H1 (cell line): ENCODE measurements at regions of chr5 and their contacts with region 1.

Region 1: DNA sequence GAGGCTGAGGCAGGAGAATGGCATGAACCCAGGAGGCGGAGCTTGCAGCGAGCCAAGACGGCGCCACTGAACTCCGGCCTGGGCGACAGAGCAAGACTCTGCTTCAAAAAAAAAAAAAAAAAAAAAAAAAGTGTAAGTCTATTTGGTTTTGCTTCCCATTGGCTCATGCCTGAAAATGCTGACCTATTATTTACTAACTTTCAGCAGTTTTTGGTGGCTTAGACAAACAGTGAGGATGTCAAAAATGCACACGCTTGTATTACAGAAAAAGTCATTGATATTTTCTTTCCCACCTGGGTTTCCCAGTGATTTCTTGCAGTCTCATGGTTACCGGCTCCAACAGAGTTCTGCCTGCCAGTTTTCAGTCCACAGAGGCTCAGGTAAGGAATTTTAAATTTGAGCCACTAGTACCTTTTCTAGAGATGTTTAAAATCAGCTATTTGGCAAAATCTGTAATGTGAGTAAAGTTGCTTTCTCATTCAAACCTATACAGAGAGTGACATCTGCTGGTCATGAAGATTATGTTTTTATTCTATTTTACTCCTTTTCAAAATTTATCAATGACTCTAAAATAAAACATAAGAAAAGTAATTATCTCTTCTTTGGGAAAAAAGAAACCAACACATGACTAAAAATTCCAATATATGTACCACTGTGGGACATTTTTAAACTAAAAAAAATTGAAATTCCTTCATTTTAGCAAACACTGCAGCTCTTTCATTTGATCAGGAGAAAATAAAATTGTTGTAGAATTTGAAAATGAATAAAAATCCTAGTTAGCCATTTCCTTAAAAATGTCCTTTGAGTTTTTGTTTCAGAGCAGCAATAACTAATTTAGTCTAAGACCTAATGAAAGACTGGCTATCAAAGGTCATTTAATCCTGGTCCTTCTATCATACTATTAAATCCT is 8.8 kb downstream of the FAM200C start:
- DNase-seq: no peak
- H3K4me3 ChIP-seq: no peak overlapping the region
- H3K27ac ChIP-seq: no peak overlapping the region
- H3K4me1 ChIP-seq: no peaks in the 10 kb centered on the region
- H3K27me3 ChIP-seq: peaks cover 0 to 1% (median 0%) of the 10 kb centered on the region in 4 experiments; a peak in 1 of 7 replicates
- CTCF ChIP-seq: peak in 2 of 3 experiments; percentile 13 to 29; a peak in 2 of 4 replicates
- EP300 ChIP-seq: no peak
- POLR2A ChIP-seq: no peak
- RAD21 ChIP-seq: peak; percentile 53 to 68

Region 2: GRCh38 chr5:160245506-160246086 is 145.4 kb before region 1 on chr5:
- CTCF ChIA-PET with region 1: interaction called, 12 read pairs
- POLR2A ChIA-PET with region 1: no interaction called
- DNase-seq: no peak
- H3K4me3 ChIP-seq: no peak overlapping the region
- H3K27ac ChIP-seq: no peak overlapping the region
- H3K4me1 ChIP-seq: peaks cover 0 to 3% (median 0%) of the 10 kb centered on the region in 4 experiments; a peak in 4 of 7 replicates
- H3K27me3 ChIP-seq: no peaks in the 10 kb centered on the region
- CTCF ChIP-seq: no peak
- EP300 ChIP-seq: no peak
- POLR2A ChIP-seq: 0 out of 3 replicates have a peak, but pooled peaks of 1 of the 2 experiments have one; percentile 20
- RAD21 ChIP-seq: no peak

Region 3: GRCh38 chr5:160369990-160370712 is 20.9 kb before region 1 on chr5 and contains the start of gene C1QTNF2:
- CTCF ChIA-PET with region 1: interaction called, 15 read pairs
- POLR2A ChIA-PET with region 1: interaction called, 3 read pairs
- DNase-seq: peak in 1 of 2 experiments; percentile 74
- H3K4me3 ChIP-seq: peak within 1 kb of the TSS; percentile 29 to 67 (median 46)
- H3K27ac ChIP-seq: no peak within 1 kb of the TSS
- H3K4me1 ChIP-seq: peaks cover 3 to 5% (median 4%) of the 10 kb centered on the region in 4 experiments; a peak in 4 of 7 replicates
- H3K27me3 ChIP-seq: peaks cover 1 to 15% (median 10%) of the 10 kb centered on the region in 4 experiments
- CTCF ChIP-seq: no peak
- EP300 ChIP-seq: no peak
- POLR2A ChIP-seq: no peak
- RAD21 ChIP-seq: no peak
- total RNA-seq, gene C1QTNF2: 1.0 and 1.3 TPM in 2 replicates

Region 4: GRCh38 chr5:160379511-160379910 is 11.5 kb before region 1 on chr5:
- CTCF ChIA-PET with region 1: interaction called, 14 read pairs
- POLR2A ChIA-PET with region 1: interaction called, 4 read pairs
- DNase-seq: no peak
- H3K4me3 ChIP-seq: no peak overlapping the region
- H3K27ac ChIP-seq: no peak overlapping the region
- H3K4me1 ChIP-seq: no peaks in the 10 kb centered on the region
- H3K27me3 ChIP-seq: no peaks in the 10 kb centered on the region
- CTCF ChIP-seq: no peak
- EP300 ChIP-seq: no peak
- POLR2A ChIP-seq: no peak
- RAD21 ChIP-seq: no peak